ENCODE measurements at regions of chr1 and their contacts with region 1.

Region 1: DNA sequence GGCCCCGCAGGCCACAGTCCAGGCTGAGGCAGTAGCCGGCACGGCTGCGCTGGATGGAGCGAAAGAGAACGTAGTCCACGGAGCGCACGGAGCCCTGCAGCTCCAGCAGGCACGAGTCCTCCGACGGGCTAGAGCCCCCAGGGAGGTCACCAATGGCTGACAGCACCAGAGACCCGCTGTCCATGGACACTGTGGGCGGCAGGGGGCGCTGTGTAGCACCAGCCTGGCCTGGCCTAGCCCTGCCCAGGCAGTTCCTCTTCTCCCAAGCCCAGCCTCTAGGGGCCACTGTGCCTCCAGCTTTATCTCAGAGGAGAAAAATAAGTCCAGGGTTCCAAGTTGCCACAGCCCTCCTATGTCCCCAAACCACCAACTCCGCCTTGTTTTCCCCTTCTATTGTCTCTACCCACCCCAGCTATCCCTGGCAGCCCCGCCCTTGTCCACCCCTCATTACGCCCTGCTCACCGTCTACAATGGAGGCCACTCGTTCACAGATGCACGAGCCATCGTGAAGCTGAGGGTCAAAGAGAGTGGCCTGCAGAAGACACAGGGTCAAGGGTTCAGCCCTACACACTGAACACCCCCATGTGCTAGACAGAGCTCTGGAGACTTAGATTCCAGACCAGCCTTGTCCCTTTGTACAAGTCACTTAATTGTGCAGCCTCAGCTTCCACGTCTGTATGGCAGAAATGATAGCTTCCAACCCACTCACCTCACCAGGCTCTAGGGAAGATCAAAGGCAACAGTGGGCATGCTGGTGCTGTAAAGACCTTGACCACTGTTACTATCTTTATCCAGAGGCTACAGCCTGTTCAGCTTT is 4.4 kb downstream of the ENTREP3 start:
- DNase-seq: peak; percentile 97
- ATAC-seq: peak; percentile 66
- H3K4me3 ChIP-seq: no peak overlapping the region
- H3K27ac ChIP-seq: no peak overlapping the region
- H3K4me1 ChIP-seq: peaks cover 19% of the 10 kb centered on the region
- H3K27me3 ChIP-seq: no peaks in the 10 kb centered on the region
- CTCF ChIP-seq: peak; percentile 99

Region 2: GRCh38 chr1:155261852-155262673 is 11.2 kb after region 1 on chr1 and contains the start of gene SCAMP3:
- CTCF ChIA-PET with region 1: interaction called, 10 read pairs
- POLR2A ChIA-PET with region 1: no interaction called
- intact Hi-C with region 1: no loop called
- DNase-seq: peak; percentile 99
- ATAC-seq: peak; percentile 94
- H3K4me3 ChIP-seq: peak within 1 kb of the TSS; percentile 88
- H3K27ac ChIP-seq: peak within 1 kb of the TSS; percentile 69
- H3K4me1 ChIP-seq: peaks cover 16% of the 10 kb centered on the region
- H3K27me3 ChIP-seq: no peaks in the 10 kb centered on the region
- CTCF ChIP-seq: no peak; the same call in 1 of the 2 replicates
- total RNA-seq, gene SCAMP3: 218 and 219 TPM in 2 replicates

Region 3: GRCh38 chr1:155342842-155343241 is 92.0 kb after region 1 on chr1:
- CTCF ChIA-PET with region 1: no interaction called
- POLR2A ChIA-PET with region 1: no interaction called
- intact Hi-C with region 1: no loop called
- DNase-seq: no peak
- ATAC-seq: no peak
- H3K4me3 ChIP-seq: no peak overlapping the region
- H3K27ac ChIP-seq: no peak overlapping the region
- H3K4me1 ChIP-seq: no peaks in the 10 kb centered on the region
- H3K27me3 ChIP-seq: no peaks in the 10 kb centered on the region
- CTCF ChIP-seq: no peak

Region 4: DNA sequence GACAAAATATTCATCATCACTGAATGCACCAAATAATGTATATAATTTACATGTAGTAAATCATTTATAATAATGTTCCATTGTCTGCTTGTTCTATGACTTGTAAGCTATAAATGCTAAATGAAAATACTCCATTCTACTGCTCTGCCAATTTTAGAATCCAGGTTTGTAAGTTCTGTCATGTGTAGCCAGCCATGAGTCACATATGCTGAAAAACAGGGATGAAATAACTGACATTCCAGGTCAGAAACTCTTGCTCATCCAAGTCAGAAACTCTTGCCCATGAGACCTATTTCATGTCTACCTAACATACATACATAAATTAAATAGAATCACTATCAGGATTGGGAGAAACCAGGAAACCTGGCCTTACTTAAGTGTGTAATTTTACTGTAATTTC is 216.2 kb after region 1 on chr1:
- CTCF ChIA-PET with region 1: interaction called, 10 read pairs
- POLR2A ChIA-PET with region 1: no interaction called
- intact Hi-C with region 1: no loop called
- DNase-seq: peak; percentile 64
- ATAC-seq: peak; percentile 84
- H3K4me3 ChIP-seq: no peak overlapping the region
- H3K27ac ChIP-seq: no peak overlapping the region
- H3K4me1 ChIP-seq: peaks cover 13% of the 10 kb centered on the region; the same call in 1 of the 2 replicates
- H3K27me3 ChIP-seq: no peaks in the 10 kb centered on the region
- CTCF ChIP-seq: no peak

Measured in PC-3 (cell line).